PC-3 (cell line): ENCODE measurements at regions of chr20 and their contacts with region 1.

Region 1: GRCh38 chr20:62368976-62369814 is 2.1 kb upstream of the LAMA5 start:
- DNase-seq: peak; percentile 61
- ATAC-seq: peak; percentile 12
- H3K4me3 ChIP-seq: peak overlapping the region; percentile 55
- H3K27ac ChIP-seq: peak overlapping the region; percentile 58
- H3K4me1 ChIP-seq: peaks cover 51% of the 10 kb centered on the region
- H3K27me3 ChIP-seq: no peaks in the 10 kb centered on the region
- CTCF ChIP-seq: peak; percentile 40; the same call in 1 of the 2 replicates

Region 2: DNA sequence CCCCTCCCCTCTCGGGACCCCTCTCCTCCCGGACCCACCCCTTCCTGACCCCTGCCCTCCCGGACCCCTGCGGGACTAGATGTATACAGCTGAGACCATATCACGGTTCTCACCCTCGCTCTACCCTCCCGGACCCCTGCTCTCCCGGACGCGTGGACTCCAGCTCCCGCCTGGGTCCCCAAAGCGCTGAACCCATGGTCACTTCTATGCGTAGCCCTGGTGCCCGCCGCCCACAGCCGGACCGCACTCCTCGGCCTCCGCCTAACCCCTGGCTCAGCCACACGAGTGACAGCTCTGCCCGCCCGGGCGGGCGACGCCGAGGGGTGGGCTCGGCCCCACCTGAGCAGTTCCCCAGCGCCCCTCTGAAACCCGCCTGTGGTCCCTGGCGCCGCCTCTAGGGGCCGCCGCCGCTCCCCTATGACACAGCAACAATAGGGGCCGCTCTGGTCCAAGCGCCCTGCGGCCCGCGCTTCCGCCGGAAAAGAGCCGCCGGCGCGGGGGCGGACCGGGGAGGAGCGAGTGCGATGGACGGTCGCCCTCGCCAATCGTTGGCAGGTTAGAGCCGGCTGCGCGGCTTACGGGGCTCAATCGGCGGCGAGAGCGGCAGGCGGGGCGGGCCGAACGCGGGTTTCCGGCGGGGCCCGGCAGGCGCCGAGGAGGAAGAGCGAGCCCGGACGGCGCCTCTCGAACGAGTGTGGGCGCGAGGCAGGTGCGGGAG is 66.7 kb before region 1 on chr20 and contains the start of gene ADRM1:
- CTCF ChIA-PET with region 1: interaction called, 5 read pairs
- POLR2A ChIA-PET with region 1: no interaction called
- intact Hi-C with region 1: loop called (anchors 5 kb)
- DNase-seq: peak; percentile 99
- ATAC-seq: peak; percentile 54
- H3K4me3 ChIP-seq: peak within 1 kb of the TSS; percentile 94
- H3K27ac ChIP-seq: peak within 1 kb of the TSS; percentile 95
- H3K4me1 ChIP-seq: peaks cover 25% of the 10 kb centered on the region
- H3K27me3 ChIP-seq: no peaks in the 10 kb centered on the region
- CTCF ChIP-seq: peak; percentile 89
- total RNA-seq, gene ADRM1: 374 and 487 TPM in 2 replicates